Left cardiac atrium (tissue), 4 donors: ENCODE measurements at regions of chr15 and their contacts with region 1.

Region 1: DNA sequence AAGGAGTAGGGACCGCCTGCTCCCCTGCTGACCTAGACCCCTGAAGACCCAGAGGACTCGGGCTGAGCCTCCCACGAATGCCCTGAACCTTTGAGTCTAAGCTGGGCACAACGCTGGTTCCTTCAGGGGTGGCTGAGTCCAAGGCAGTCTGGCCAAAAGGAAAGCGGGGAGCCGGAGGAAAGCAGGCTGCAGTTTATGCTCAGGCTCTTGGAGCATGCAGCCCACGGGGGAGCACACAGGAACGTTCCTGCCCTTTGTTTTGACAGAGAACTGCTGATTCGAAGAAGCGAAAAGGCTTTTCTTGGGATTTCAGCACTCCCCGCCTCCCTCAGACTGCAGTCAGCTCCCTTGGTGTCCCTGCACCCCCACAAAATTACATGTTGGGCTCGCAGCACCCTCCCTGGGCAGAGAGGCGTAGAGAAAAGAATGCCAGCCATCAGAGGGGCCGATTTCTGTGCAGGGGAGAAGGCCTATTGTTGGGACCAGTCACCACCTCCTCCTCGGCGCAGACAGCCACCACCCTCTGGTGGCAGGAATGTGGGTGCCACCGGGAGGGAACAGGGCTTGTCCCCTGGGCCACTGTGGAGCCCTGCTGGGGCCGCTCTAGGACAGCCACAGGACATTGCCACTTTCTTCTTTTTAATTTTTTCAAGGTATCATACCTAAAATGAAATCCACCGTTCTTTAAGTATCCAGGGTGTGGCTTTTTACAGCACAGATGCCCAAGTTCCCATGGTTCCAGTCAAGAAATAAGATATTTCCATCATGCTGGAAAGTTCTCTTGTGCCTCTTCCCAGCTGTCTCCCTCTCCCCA is 72.2 kb downstream of the SMAD6 start:
- DNase-seq: peak; percentile 82
- ATAC-seq: peak; percentile 88 to 89

Region 2: GRCh38 chr15:66603301-66604179 is 170.7 kb before region 1 on chr15:
- intact Hi-C with region 1: loop called (anchors 5 to 10 kb)
- DNase-seq: peak; percentile 77
- ATAC-seq: peak; percentile 86 to 91

Region 3: DNA sequence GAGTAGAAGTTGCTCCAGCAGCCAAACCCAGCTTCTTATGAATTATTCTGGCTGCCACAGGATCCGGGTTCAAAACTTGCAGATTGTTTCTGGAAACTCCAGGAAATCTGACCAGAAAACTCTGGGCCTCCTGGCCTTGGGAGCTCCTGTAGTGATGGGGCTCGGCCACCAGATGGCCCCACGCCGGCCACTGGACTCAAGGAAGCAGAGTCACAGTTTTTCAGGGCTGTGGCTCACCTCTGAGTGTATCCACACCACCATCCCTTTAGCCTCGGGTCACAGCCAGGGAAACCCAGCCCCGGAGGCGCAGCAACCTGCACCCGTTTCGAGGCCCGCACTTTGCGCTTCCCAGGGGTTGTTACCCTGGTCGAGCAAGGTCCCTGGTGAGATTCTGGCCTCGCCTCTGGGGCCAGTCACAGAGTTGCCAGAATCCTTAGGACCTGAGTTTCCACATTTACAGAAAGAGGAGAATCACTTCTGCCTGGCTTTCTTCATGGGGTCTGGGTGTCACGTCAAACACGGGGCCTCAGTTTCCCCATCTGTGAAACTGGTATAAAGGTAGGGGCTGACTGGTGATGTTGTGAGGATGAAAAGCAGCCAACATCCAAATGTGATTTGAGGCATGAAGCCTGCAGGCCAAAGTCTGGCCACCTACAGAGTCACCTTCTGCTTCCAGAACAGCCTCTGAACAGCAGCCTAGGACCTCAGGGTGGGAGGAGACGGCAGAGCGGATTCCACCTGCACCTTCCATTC is 154.9 kb before region 1 on chr15:
- intact Hi-C with region 1: loop called in 1 of 2 experiments (anchors 5 kb)
- DNase-seq: peak; percentile 83
- ATAC-seq: peak; percentile 62 to 70

Region 4: GRCh38 chr15:66707310-66708082 is 66.7 kb before region 1 on chr15:
- intact Hi-C with region 1: loop called in 1 of 2 experiments (anchors 5 kb)
- DNase-seq: no peak
- ATAC-seq: peak; percentile 28 to 50